ENCODE measurements at regions of chr7 and their contacts with region 1.

Region 1: DNA sequence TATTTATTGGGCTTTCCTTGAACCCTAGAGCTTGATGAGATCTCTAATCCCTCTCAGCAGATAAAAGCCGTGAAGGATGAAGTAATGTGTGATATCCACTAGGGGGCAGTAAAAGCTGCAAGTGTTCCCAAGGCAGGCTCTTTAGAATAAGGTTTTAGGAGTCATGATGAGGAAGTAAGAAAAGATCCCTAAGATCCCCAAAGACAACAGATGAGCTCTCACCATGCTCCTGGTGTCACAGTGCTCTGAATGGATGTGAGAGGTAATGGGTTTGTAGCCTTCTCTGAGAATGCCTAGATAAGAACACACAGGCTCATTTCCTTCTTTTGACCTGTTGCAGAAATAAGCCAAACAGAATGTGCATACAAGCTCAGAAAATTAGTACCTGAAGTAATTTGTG is 70.4 kb upstream of the ITPRID1 start:
- DNase-seq: peak; percentile 32
- ATAC-seq: peak; percentile 87
- H3K4me3 ChIP-seq: no peak overlapping the region
- H3K27ac ChIP-seq: no peak overlapping the region
- H3K4me1 ChIP-seq: no peaks in the 10 kb centered on the region
- H3K27me3 ChIP-seq: peaks cover 28% of the 10 kb centered on the region; the same call in 1 of the 2 replicates
- CTCF ChIP-seq: peak; percentile 70 to 84 (median 71)
- POLR2A ChIP-seq: no peak
- RAD21 ChIP-seq: peak; percentile 76

Region 2: GRCh38 chr7:31192986-31193385 is 250.5 kb before region 1 on chr7:
- CTCF ChIA-PET with region 1: interaction called, 15 read pairs
- POLR2A ChIA-PET with region 1: no interaction called
- RAD21 ChIA-PET with region 1: no interaction called
- intact Hi-C with region 1: no loop called
- DNase-seq: peak; percentile 36
- ATAC-seq: peak; percentile 99
- H3K4me3 ChIP-seq: no peak overlapping the region
- H3K27ac ChIP-seq: no peak overlapping the region
- H3K4me1 ChIP-seq: no peaks in the 10 kb centered on the region
- H3K27me3 ChIP-seq: peaks cover 5% of the 10 kb centered on the region; the same call in 1 of the 2 replicates
- CTCF ChIP-seq: peak; percentile 48 to 91 (median 87); a peak in 5 of 6 replicates
- POLR2A ChIP-seq: no peak
- RAD21 ChIP-seq: peak; percentile 85

Region 3: GRCh38 chr7:31419505-31420055 is 23.9 kb before region 1 on chr7:
- CTCF ChIA-PET with region 1: interaction called, 11 read pairs
- POLR2A ChIA-PET with region 1: no interaction called
- RAD21 ChIA-PET with region 1: no interaction called
- intact Hi-C with region 1: no loop called
- DNase-seq: no peak
- ATAC-seq: no peak
- H3K4me3 ChIP-seq: no peak overlapping the region
- H3K27ac ChIP-seq: no peak overlapping the region
- H3K4me1 ChIP-seq: no peaks in the 10 kb centered on the region
- H3K27me3 ChIP-seq: peaks cover 40% of the 10 kb centered on the region
- CTCF ChIP-seq: no peak
- POLR2A ChIP-seq: no peak
- RAD21 ChIP-seq: no peak

Region 4: DNA sequence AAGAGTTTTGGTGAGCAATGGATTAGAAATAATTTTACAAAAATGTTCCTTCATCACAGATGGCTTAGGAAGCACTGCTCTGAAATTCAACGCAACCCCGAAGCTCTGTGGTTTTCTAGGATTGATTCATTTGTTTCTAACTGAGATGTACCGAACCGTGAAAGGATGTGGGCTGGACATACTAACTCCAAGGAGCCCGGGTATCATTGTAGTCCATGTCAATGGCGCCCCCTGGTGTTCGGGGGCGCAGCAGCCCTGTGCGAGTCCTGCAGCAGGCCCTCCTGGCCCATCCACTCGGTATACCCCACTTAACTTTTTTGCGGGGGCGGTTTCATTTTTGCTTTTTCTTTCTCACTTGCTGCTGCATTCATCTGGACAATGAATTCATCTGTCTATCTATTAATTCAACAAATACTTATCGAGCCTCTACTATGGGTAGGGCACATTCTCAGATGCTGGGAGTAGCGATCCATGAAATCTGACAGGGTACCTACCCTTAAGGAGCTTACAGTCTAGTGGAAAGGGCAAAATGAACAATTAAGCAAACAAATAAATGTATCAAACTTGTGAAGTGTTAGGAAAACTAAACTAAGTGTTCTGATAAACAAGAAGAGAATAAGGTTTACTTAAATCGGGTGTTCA is 45.2 kb after region 1 on chr7:
- CTCF ChIA-PET with region 1: interaction called, 18 read pairs
- POLR2A ChIA-PET with region 1: no interaction called
- RAD21 ChIA-PET with region 1: no interaction called
- intact Hi-C with region 1: loop called (anchors 1 kb)
- DNase-seq: peak; percentile 41
- ATAC-seq: peak; percentile 100
- H3K4me3 ChIP-seq: no peak overlapping the region
- H3K27ac ChIP-seq: no peak overlapping the region
- H3K4me1 ChIP-seq: no peaks in the 10 kb centered on the region; a peak in 1 of 4 replicates
- H3K27me3 ChIP-seq: peaks cover 6% of the 10 kb centered on the region; the same call in 1 of the 2 replicates
- CTCF ChIP-seq: peak; percentile 60 to 93 (median 92); a peak in 5 of 6 replicates
- POLR2A ChIP-seq: no peak
- RAD21 ChIP-seq: peak; percentile 74

Region 5: GRCh38 chr7:31633894-31634494 is 190.5 kb after region 1 on chr7:
- CTCF ChIA-PET with region 1: interaction called, 19 read pairs
- POLR2A ChIA-PET with region 1: no interaction called
- RAD21 ChIA-PET with region 1: no interaction called
- intact Hi-C with region 1: loop called (anchors 1 kb)
- DNase-seq: peak; percentile 34
- ATAC-seq: peak; percentile 83
- H3K4me3 ChIP-seq: no peak overlapping the region
- H3K27ac ChIP-seq: no peak overlapping the region
- H3K4me1 ChIP-seq: no peaks in the 10 kb centered on the region
- H3K27me3 ChIP-seq: no peaks in the 10 kb centered on the region
- CTCF ChIP-seq: peak; percentile 58 to 62 (median 62)
- POLR2A ChIP-seq: no peak
- RAD21 ChIP-seq: peak; percentile 81

Region 6: DNA sequence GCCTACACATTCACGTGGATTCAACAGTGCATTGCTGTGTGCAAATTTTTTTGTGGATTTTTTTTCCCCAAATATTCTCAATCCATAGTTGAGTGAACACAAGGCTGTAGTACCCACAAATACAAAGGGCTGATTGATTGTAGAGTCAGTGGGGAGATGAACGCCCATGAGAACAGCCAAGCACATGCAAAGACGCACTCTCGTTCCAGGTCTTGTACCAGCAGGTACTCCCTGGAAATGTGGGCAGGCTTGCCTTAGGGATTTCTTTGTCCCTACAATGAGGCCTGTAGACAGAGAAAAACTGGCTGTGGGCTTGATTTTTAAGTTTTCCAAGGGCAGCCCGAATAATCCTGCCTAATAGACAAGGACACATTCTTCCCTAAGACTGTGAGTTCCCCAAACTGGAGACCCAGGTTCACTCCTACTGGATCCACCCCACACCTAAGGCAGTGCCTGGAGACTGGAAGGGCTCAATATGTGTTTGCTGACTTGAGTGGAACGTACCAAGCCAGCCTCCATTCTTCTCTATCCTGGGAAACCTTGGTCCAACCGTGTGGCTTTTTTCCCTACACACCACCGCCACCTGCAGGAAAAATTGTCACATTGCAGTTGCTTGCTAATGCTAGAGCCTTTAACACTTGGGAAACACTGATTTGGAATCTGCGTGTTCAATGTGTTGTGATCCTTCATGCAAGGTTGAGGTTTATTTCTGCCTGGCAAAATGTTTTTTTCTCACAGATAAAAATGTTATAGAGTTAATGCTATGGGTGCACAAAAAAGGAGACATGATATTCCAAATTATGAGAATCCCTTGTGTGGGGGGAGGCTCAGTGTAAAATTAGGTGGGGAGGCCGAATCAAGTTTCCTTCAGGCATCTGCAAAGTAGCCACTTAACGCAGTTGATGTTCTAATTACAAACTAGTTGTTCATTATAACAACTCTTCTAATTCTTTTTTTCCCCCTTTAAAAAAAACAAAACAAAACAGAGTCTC is 292.8 kb after region 1 on chr7:
- CTCF ChIA-PET with region 1: no interaction called
- POLR2A ChIA-PET with region 1: no interaction called
- RAD21 ChIA-PET with region 1: no interaction called
- intact Hi-C with region 1: loop called (anchors 2 kb)
- DNase-seq: peak; percentile 35
- ATAC-seq: peak; percentile 89
- H3K4me3 ChIP-seq: no peak overlapping the region
- H3K27ac ChIP-seq: no peak overlapping the region
- H3K4me1 ChIP-seq: no peaks in the 10 kb centered on the region
- H3K27me3 ChIP-seq: peaks cover 9% of the 10 kb centered on the region
- CTCF ChIP-seq: peak; percentile 63 to 81 (median 81)
- POLR2A ChIP-seq: no peak
- RAD21 ChIP-seq: peak; percentile 85

Region 7: GRCh38 chr7:31948029-31948428 is 504.6 kb after region 1 on chr7:
- CTCF ChIA-PET with region 1: no interaction called
- POLR2A ChIA-PET with region 1: no interaction called
- RAD21 ChIA-PET with region 1: no interaction called
- intact Hi-C with region 1: no loop called
- DNase-seq: no peak
- ATAC-seq: no peak
- H3K4me3 ChIP-seq: no peak overlapping the region
- H3K27ac ChIP-seq: no peak overlapping the region
- H3K4me1 ChIP-seq: no peaks in the 10 kb centered on the region
- H3K27me3 ChIP-seq: no peaks in the 10 kb centered on the region
- CTCF ChIP-seq: no peak
- POLR2A ChIP-seq: no peak
- RAD21 ChIP-seq: no peak

Measured in HCT116 (cell line).